ENCODE measurements at regions of chr15 and their contacts with region 1.

Region 1: GRCh38 chr15:74373731-74374647 is 6.5 kb upstream of the CYP11A1 start:
- DNase-seq: peak; percentile 89
- ATAC-seq: peak; percentile 94
- H3K4me3 Mint-ChIP-seq: peak overlapping the region; percentile 81
- H3K27ac Mint-ChIP-seq: peak overlapping the region; percentile 12
- H3K4me1 Mint-ChIP-seq: peaks cover 29% of the 10 kb centered on the region
- H3K27me3 Mint-ChIP-seq: peaks cover 9% of the 10 kb centered on the region
- CTCF ChIP-seq: peak; percentile 32

Region 2: GRCh38 chr15:74179341-74179841 is 194.6 kb before region 1 on chr15:
- CTCF ChIA-PET with region 1: no interaction called
- POLR2A ChIA-PET with region 1: no interaction called
- intact Hi-C with region 1: no loop called
- DNase-seq: no peak
- ATAC-seq: no peak
- H3K4me3 Mint-ChIP-seq: no peak overlapping the region
- H3K27ac Mint-ChIP-seq: no peak overlapping the region
- H3K4me1 Mint-ChIP-seq: no peaks in the 10 kb centered on the region
- H3K27me3 Mint-ChIP-seq: peaks cover 9% of the 10 kb centered on the region
- CTCF ChIP-seq: no peak

Region 3: DNA sequence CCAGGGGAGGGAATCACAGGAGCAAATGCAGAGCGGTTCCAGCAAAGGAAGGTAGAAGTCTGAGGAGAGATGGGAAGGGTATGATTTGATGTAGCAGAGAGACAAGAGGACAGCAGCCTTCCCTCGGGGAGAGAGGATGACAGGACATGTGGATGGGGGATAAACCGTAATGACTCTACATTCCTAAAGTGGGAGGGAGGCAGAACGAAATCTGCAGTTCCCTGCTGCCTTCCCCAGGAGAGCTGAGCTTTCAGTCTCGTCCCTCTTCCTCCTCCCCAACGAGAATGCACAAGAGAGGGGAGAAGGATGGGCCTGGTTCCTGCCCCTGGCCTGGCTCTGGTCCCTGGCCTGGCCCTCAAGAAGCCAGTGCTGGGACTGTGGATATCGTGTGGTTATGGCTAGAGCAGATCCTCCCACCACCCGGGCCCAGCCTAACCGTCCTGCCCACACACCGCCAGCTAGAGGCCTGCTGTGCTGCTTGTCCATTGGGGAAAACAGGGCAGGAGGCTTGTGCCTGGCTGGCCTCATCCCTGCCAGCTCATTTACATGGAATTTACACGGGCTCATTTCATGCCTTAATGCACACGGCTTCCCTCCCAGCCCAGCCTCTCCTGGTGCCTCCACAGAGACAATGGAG is 33.2 kb after region 1 on chr15:
- CTCF ChIA-PET with region 1: interaction called, 10 read pairs
- POLR2A ChIA-PET with region 1: interaction called, 563 read pairs
- intact Hi-C with region 1: no loop called
- DNase-seq: no peak
- ATAC-seq: no peak
- H3K4me3 Mint-ChIP-seq: no peak overlapping the region
- H3K27ac Mint-ChIP-seq: peak overlapping the region; percentile 30
- H3K4me1 Mint-ChIP-seq: peaks cover 70% of the 10 kb centered on the region
- H3K27me3 Mint-ChIP-seq: no peaks in the 10 kb centered on the region
- CTCF ChIP-seq: no peak

Region 4: DNA sequence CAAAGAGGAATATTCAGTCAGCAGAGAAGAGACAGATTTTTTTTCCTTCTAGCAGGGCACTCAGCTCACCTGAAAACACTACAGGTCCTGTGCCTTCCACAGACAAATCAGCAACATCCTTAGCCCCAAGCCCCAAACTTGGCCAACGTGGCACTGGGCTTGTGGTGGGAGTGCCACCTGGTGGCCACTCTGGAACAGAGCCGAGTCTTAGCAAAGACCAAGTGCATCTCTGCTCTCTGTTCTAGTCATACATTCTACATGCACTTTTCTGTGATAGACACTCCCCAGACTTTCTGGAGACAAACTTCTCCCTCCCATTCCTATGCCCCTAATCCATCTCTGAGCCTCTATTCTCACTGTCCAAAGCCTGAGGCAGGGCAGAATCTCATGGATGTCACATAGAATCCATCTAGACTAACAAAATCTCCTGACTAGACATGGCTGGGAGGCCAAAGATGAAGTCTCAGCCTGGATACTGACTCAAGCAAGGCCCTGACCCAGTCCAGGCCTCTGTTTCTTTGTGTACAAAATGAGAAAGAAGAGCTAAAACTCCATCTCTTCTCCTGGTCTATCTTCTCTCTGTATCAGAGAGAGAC is 64.8 kb after region 1 on chr15:
- CTCF ChIA-PET with region 1: interaction called, 403 read pairs
- POLR2A ChIA-PET with region 1: interaction called, 10 read pairs
- intact Hi-C with region 1: loop called (anchors 1 kb)
- DNase-seq: peak; percentile 67
- ATAC-seq: peak; percentile 53
- H3K4me3 Mint-ChIP-seq: peak overlapping the region; percentile 28
- H3K27ac Mint-ChIP-seq: peak overlapping the region; percentile 73
- H3K4me1 Mint-ChIP-seq: peaks cover 40% of the 10 kb centered on the region
- H3K27me3 Mint-ChIP-seq: no peaks in the 10 kb centered on the region
- CTCF ChIP-seq: peak; percentile 54

Region 5: GRCh38 chr15:74497584-74497983 is 123.6 kb after region 1 on chr15:
- CTCF ChIA-PET with region 1: no interaction called
- POLR2A ChIA-PET with region 1: no interaction called
- intact Hi-C with region 1: no loop called
- DNase-seq: no peak
- ATAC-seq: no peak
- H3K4me3 Mint-ChIP-seq: no peak overlapping the region
- H3K27ac Mint-ChIP-seq: no peak overlapping the region
- H3K4me1 Mint-ChIP-seq: no peaks in the 10 kb centered on the region
- H3K27me3 Mint-ChIP-seq: no peaks in the 10 kb centered on the region
- CTCF ChIP-seq: no peak

Region 6: DNA sequence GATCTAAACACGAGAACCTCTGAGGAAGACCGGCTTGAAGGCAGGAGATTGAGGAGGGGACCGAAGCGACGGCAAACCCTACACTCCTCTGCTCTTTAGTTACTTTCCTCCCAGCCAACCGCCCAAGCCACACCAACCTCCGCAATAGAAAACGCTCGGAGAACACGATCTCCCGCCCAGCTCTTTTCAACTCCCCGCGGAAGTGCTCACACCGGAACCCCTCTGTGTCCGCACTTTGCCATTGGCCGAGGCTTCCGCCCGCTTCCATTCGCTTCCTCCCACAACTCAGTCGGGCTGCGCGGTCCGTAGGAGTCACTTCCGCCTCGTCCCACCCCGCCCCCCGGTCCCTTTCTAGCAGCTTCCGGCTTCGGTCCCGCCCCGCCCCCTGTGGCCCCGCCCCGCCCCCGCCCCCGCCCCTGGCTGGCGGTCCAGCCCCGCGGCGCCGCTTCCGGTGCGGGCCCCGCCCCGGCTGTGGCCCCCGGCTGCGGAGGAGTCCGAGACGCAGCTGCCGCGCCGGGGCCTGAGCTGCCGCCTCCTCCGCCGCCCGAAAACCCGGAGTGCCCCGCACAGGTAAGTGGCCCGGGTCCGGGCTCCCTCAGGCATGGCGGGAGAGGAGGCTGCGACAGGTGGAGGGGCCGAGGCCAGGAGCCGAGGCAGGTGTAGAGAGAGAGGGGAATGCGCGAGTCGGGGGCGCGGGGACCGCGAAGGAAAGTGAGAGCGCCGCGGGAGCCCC is 166.9 kb after region 1 on chr15 and contains the start of gene ARID3B:
- CTCF ChIA-PET with region 1: no interaction called
- POLR2A ChIA-PET with region 1: interaction called, 3 read pairs
- intact Hi-C with region 1: loop called (anchors 1 kb)
- DNase-seq: peak; percentile 79
- ATAC-seq: peak; percentile 86
- H3K4me3 Mint-ChIP-seq: peak within 1 kb of the TSS; percentile 98
- H3K27ac Mint-ChIP-seq: peak within 1 kb of the TSS; percentile 95
- H3K4me1 Mint-ChIP-seq: peaks cover 49% of the 10 kb centered on the region
- H3K27me3 Mint-ChIP-seq: no peaks in the 10 kb centered on the region
- CTCF ChIP-seq: no peak
- total RNA-seq, gene ARID3B: 24.8 and 26.9 TPM in 2 replicates

Region 7: DNA sequence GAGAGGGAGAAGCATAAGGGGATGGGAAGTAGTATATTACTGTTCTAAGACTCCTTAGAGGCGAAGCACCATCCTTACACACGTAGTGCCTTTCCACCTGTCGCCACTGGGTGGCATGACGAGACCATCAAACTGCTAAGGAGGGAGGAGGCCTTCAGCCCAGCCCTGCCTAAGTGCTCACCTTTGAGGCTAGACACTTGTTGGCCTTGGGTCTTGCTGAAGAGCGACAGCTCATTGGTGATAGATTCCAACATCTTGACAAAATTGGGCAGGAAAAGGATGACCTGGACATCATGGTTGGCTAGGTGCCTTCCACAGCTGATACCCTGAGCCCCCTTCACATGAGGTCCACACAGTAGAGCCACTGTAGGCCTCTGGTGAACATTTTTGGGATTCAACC is 261.2 kb after region 1 on chr15:
- CTCF ChIA-PET with region 1: interaction called, 77 read pairs
- POLR2A ChIA-PET with region 1: no interaction called
- intact Hi-C with region 1: loop called (anchors 1 kb)
- DNase-seq: peak; percentile 61
- ATAC-seq: peak; percentile 64
- H3K4me3 Mint-ChIP-seq: no peak overlapping the region
- H3K27ac Mint-ChIP-seq: no peak overlapping the region
- H3K4me1 Mint-ChIP-seq: peaks cover 18% of the 10 kb centered on the region
- H3K27me3 Mint-ChIP-seq: no peaks in the 10 kb centered on the region
- CTCF ChIP-seq: no peak

Measured in activated B cell treated with CpG ODN at 0.5 μM for 24 hours (primary cell).